ENCODE measurements at regions of chr6 and their contacts with region 1.

Region 1: GRCh38 chr6:111823831-111824607 is 49.2 kb downstream of the FYN start:
- DNase-seq: no peak
- H3K4me3 ChIP-seq: peak overlapping the region in 1 of 3 donors; percentile 11
- H3K27ac ChIP-seq: peak overlapping the region; percentile 58 to 63
- H3K4me1 ChIP-seq: no peaks in the 10 kb centered on the region
- H3K27me3 ChIP-seq: no peaks in the 10 kb centered on the region
- CTCF ChIP-seq: no peak
- POLR2A ChIP-seq: no peak

Region 2: DNA sequence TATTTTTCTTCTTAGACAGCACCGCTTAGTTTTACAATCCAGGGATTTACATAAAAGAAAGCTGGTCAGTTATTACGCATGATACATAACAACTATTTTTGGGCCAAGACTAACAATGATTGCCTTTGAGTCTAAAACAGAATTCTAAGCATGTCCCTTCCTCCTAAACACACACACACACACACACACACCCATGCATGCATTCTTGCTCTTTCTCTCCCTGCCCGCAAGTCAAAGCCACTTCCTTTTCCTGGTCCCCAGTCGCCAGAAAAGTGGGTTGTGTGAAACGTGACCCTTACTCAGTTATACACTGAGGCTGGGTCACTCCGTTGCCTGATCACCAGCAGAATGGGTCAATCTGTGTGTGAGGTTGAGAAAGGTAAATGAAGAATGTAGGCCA is 17.8 kb after region 1 on chr6:
- intact Hi-C with region 1: no loop called
- DNase-seq: no peak
- H3K4me3 ChIP-seq: no peak overlapping the region
- H3K27ac ChIP-seq: peak overlapping the region; percentile 7 to 35
- H3K4me1 ChIP-seq: no peaks in the 10 kb centered on the region
- H3K27me3 ChIP-seq: no peaks in the 10 kb centered on the region
- CTCF ChIP-seq: no peak
- POLR2A ChIP-seq: no peak

Region 3: DNA sequence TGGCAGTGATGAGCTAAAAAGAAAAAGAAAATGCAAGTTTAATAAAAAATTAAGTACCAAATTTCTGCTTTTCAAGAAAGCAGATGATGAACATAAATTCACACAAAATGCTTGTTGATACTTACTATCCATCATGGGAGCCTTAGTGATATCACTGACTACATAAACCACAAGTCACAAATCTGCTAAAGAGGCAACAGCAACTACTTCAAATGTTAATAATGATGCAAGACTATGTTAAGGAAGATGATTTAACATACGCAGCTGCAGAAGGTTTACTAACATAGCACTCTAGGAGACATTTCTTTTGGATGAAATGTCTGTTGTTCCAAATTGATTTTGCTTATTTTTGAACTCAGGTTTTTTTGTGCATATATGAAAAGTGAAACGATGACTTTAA is 30.7 kb after region 1 on chr6:
- intact Hi-C with region 1: loop called (anchors 5 kb)
- DNase-seq: no peak
- H3K4me3 ChIP-seq: no peak overlapping the region
- H3K27ac ChIP-seq: no peak overlapping the region
- H3K4me1 ChIP-seq: no peaks in the 10 kb centered on the region
- H3K27me3 ChIP-seq: no peaks in the 10 kb centered on the region
- CTCF ChIP-seq: no peak
- POLR2A ChIP-seq: no peak

Measured in breast epithelium (tissue), 4 donors.